ENCODE measurements at regions of chr20 and their contacts with region 1.

Region 1: GRCh38 chr20:37282556-37282955 is 6.9 kb upstream of the MANBAL start:
- DNase-seq: peak; percentile 71
- H3K4me3 ChIP-seq: no peak overlapping the region
- H3K27ac ChIP-seq: no peak overlapping the region
- H3K4me1 ChIP-seq: peaks cover 1% of the 10 kb centered on the region
- H3K27me3 ChIP-seq: no peaks in the 10 kb centered on the region
- CTCF ChIP-seq: peak; percentile 22 to 74 (median 55)
- POLR2A ChIP-seq: no peak

Region 2: DNA sequence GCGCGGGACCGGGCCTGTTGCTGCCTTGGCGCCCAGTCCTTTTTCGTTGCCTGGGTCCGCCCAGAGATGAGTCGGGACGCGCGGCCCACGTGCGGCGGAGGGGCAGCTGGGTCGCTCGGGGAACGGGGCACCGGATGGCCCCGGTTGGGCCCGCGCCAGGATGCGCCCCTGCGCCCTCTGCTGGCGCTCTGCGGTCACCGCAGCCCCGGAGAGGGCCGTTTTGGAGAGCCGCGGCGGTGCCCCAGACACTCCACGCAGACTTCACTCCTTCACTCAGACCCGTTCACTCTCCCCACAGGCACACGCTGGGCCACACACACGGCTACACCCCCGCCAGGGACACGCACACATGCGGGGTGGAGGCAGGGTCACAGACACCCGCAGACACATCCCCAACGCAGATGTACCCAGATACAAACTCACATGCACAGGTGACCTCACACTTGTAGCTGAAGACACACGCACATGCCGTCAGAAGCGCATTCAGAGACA is 102.2 kb after region 1 on chr20:
- intact Hi-C with region 1: loop called (anchors 10 kb)
- DNase-seq: peak; percentile 68
- H3K4me3 ChIP-seq: peak overlapping the region; percentile 46 to 47
- H3K27ac ChIP-seq: peak overlapping the region; percentile 43 to 64
- H3K4me1 ChIP-seq: peaks cover 17% of the 10 kb centered on the region
- H3K27me3 ChIP-seq: no peaks in the 10 kb centered on the region
- CTCF ChIP-seq: peak; percentile 92 to 97 (median 93)
- POLR2A ChIP-seq: no peak

Region 3: GRCh38 chr20:37430788-37431460 is 148.4 kb after region 1 on chr20:
- intact Hi-C with region 1: no loop called
- DNase-seq: no peak
- H3K4me3 ChIP-seq: no peak overlapping the region
- H3K27ac ChIP-seq: no peak overlapping the region
- H3K4me1 ChIP-seq: no peaks in the 10 kb centered on the region
- H3K27me3 ChIP-seq: no peaks in the 10 kb centered on the region
- CTCF ChIP-seq: no peak
- POLR2A ChIP-seq: no peak

Region 4: DNA sequence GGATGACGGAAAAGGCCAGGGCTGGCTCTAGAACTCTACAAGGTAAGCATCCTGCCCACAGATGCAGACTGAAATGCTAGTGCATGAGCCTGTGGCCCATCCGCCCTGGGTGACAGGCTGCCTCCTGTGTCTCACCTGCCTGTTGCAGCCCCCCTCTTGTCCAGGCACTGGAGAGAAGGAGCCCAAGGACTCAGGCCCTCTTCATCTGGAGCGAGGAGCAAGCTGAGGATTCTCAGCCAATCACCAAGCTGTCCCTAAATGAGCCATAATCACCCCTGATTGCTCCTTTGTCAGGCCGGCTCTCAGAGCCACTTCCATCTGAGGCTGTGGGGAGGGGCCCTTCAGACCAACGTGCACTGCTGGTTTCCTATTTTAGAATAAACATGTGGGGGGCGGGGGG is 1431.8 kb after region 1 on chr20:
- intact Hi-C with region 1: no loop called
- DNase-seq: no peak
- H3K4me3 ChIP-seq: no peak overlapping the region
- H3K27ac ChIP-seq: no peak overlapping the region
- H3K4me1 ChIP-seq: no peaks in the 10 kb centered on the region
- H3K27me3 ChIP-seq: no peaks in the 10 kb centered on the region
- CTCF ChIP-seq: no peak
- POLR2A ChIP-seq: no peak

Measured in testis (tissue), 5 donors.